IMR-90 (cell line): ENCODE measurements at regions of chr2 and their contacts with region 1.

Region 1: DNA sequence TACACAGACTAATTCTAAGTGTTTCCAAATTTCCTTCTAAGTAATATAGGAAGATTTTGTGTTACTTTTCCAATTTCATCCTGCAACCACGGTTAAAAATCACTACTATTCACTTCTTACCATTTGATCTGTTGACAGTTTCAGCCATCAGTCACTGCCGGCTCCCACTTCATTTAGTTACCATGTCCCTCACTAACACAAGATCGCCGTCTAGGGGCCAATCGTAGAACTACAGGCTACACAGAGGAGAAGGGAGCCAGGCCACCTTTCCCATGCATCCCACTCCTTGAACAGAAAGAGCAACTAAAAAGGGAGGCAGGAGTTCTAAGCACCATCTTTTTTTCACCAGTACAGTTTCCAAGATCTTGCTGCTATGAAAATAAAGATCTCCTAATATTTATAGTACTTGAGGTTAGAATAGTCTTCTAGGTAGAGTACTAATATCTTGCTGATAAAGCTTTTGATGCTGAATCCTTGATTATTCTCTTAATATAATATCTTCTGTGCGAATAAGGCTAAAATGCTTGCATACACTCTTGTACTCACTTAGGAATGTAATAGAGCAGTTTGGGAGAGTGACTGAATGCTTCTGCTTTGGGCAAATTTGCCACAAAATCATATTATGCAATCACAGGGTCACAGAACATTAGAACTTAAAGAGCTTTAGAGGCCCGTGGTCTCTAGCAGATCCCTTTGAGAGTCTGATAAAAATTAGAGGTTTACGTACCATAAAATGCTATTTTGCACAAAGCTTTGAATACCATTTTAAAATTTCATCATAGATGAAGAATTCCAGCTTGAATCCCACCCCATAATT is 39.5 kb upstream of the CYP1B1 start:
- DNase-seq: peak; percentile 51
- ATAC-seq: peak; percentile 91
- H3K4me3 ChIP-seq: no peak overlapping the region
- H3K27ac ChIP-seq: no peak overlapping the region
- H3K4me1 ChIP-seq: peaks cover 4% of the 10 kb centered on the region; the same call in 1 of the 2 replicates
- H3K27me3 ChIP-seq: peaks cover 11% of the 10 kb centered on the region; the same call in 1 of the 2 replicates
- CTCF ChIP-seq: peak; percentile 80
- POLR2A ChIP-seq: no peak
- RAD21 ChIP-seq: peak; percentile 83

Region 2: GRCh38 chr2:38076606-38077430 is 38.6 kb before region 1 on chr2:
- CTCF ChIA-PET with region 1: no interaction called
- POLR2A ChIA-PET with region 1: no interaction called
- dilution Hi-C with region 1: no loop called
- in situ Hi-C with region 1: no loop called
- intact Hi-C with region 1: loop called (anchors 5 kb)
- DNase-seq: peak; percentile 90
- ATAC-seq: peak; percentile 83
- H3K4me3 ChIP-seq: peak overlapping the region; percentile 35
- H3K27ac ChIP-seq: peak overlapping the region; percentile 57
- H3K4me1 ChIP-seq: no peaks in the 10 kb centered on the region
- H3K27me3 ChIP-seq: peaks cover 30% of the 10 kb centered on the region
- CTCF ChIP-seq: 0 out of 2 replicates have a peak, but pooled peaks have one; percentile 16
- POLR2A ChIP-seq: peak; percentile 66
- RAD21 ChIP-seq: no peak; the same call in 1 of the 2 replicates

Region 3: DNA sequence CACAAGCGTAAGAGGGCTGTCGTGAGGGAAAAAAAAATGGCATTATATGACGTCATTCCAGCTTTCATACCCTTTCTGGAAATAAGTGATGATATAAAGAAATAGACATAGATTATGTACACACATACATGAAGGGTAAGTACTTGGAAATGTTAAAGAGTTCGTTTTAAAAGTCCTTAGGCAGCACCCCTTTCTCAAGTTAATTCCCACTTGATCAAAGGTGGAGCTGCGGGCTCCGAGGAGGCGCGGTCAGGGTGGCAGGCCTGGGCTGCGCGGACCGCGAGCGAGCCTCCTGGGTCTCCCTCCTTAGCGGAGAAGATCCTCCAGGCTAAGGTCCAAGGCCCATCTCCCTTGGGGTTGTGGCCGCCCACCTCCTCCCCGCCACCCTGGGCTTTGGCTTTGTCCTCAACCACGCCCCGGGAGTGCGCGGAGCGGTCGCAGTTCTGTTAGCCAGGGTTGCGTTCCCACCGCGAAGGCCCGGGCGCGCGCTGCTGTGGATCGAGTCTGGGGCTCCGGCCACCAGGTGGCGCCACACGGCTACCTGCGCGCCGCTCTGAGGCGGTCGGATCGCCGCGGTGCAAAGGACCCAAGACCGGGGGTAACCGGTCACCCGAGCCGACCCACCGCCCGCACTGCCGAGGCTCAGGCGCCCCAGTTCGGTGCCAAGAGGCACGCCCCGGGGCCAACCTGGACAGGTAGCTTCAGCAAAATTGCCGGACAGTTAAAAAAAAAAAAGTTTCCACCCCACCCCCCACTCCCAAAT is 420.5 kb after region 1 on chr2:
- CTCF ChIA-PET with region 1: no interaction called
- POLR2A ChIA-PET with region 1: no interaction called
- dilution Hi-C with region 1: no loop called
- in situ Hi-C with region 1: no loop called
- intact Hi-C with region 1: no loop called
- DNase-seq: peak; percentile 46
- ATAC-seq: peak; percentile 94
- H3K4me3 ChIP-seq: peak overlapping the region; percentile 51
- H3K27ac ChIP-seq: no peak overlapping the region; the same call in 1 of the 2 replicates
- H3K4me1 ChIP-seq: no peaks in the 10 kb centered on the region
- H3K27me3 ChIP-seq: peaks cover 10% of the 10 kb centered on the region; the same call in 1 of the 2 replicates
- CTCF ChIP-seq: peak; percentile 80
- POLR2A ChIP-seq: no peak
- RAD21 ChIP-seq: peak; percentile 71

Region 4: DNA sequence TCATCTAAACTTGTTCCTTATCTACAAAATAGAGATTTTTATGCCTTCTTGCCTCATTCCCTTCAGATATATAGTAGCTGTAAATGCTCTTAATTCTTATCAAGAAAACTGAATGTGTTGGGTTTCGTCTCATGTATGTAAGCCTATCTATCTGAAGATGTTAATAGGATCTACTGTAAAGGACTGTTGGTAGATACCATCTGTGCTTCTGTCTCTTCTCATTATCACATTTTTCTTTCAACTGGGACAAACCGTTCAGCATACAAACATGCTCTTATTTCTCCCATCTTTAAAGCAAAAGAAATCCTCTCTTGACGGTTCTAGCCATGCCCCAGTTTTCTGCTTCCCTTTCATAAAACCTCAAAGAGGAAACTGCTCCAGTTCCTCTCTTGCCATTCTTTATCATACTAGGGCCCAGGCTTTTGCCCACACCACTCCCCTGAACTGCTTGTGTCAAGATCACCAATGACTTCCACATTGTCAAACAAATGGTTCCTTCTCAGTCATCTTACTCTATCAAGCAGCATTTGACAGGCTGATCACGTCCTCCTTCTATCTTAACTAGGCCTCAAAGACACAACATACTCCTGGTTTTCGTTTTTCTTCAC is 863.0 kb after region 1 on chr2:
- CTCF ChIA-PET with region 1: no interaction called
- POLR2A ChIA-PET with region 1: no interaction called
- dilution Hi-C with region 1: no loop called
- in situ Hi-C with region 1: no loop called
- intact Hi-C with region 1: no loop called
- DNase-seq: no peak
- ATAC-seq: no peak
- H3K4me3 ChIP-seq: no peak overlapping the region
- H3K27ac ChIP-seq: no peak overlapping the region
- H3K4me1 ChIP-seq: no peaks in the 10 kb centered on the region
- H3K27me3 ChIP-seq: no peaks in the 10 kb centered on the region
- CTCF ChIP-seq: no peak
- POLR2A ChIP-seq: no peak
- RAD21 ChIP-seq: no peak